ENCODE measurements at regions of chrX and their contacts with region 1.

Region 1: DNA sequence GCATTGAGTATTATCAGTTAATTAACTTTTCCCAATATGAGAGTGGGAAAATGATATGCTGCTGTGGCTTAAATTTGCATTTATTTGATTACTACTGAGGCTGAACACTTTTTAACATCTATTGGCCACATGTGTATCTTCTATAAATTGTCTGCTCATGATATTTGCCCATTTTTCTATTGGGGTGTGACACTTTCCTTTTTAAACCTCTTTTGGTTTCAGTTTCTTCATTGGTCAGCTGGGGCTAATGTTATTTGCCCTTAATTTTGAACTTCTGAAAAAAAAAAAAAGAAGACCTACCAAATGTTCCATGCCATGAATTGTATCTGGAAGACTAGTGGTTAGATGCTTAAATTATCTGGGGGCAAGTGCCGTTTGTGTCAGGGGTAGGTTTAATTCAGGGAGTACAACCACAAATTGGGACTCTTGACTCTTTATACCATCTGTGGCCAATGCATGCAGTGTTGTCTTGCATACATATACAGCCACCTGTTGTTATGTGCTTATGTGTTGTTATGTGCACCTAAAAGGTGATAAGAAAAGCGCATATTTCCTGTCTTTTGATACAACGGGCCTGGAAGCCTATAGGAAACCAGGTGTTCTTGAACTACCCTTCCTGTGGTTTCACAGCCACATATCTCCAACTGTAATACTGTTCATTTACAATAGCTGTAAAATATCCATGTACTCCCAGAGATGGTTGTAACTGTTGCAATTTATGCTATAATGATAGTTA is 49.0 kb downstream of the SH2D1A start:
- DNase-seq: peak in 4 of 5 donors; percentile 15 to 38 (median 28)
- H3K4me3 ChIP-seq: no peak overlapping the region
- H3K4me3 Mint-ChIP-seq: peak overlapping the region; percentile 7 to 83 (median 26)
- H3K27ac ChIP-seq: no peak overlapping the region
- H3K27ac Mint-ChIP-seq: peak overlapping the region; percentile 0 to 83 (median 42)
- H3K4me1 ChIP-seq: peaks cover 25% of the 10 kb centered on the region
- H3K4me1 Mint-ChIP-seq: peaks cover 15 to 38% (median 26%) of the 10 kb centered on the region in 4 donors
- H3K27me3 ChIP-seq: no peaks in the 10 kb centered on the region
- H3K27me3 Mint-ChIP-seq: no peaks in the 10 kb centered on the region

Region 2: DNA sequence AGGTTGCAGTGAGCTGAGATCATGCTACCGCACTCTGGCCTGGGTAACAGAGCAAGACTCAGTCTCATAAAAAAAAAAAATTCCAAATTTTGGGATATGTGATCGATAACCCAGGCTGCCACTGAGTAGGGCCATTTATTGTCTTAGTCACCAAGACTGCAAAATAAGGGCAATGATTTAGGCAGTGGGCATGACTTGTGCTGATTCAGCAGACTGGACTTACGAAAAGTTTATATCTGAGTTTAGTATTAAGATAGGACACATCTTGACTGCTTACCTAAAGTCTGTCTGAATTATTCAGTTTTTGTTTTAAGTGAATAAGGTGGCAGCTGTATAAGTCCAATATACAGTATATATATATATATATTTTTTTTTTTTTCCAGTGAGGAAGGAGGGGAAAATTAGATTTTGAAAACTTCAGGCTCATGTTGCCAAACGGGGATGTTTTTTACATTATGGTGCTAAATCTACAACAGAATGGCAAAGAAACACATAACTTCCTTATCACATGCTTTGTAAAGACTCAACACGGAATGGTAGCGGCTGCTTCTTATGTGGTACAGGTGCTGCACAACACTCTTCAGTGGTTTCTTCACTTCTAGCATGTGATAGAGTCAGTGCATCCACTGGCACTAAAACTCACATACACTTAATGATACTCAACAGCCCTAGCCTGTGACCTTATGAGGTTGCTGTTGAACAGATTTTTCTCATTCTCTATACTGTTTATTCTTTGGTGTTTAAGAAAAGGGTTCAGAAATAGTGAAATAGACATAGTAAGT is 56.4 kb before region 1 on chrX:
- CTCF ChIA-PET with region 1: no interaction called
- POLR2A ChIA-PET with region 1: no interaction called
- intact Hi-C with region 1: no loop called
- DNase-seq: peak; percentile 35 to 61 (median 43)
- H3K4me3 ChIP-seq: no peak overlapping the region
- H3K4me3 Mint-ChIP-seq: peak overlapping the region in 1 of 8 donors; percentile 52
- H3K27ac ChIP-seq: no peak overlapping the region
- H3K27ac Mint-ChIP-seq: peak overlapping the region in 4 of 7 donors; percentile 5 to 60 (median 46)
- H3K4me1 ChIP-seq: peaks cover 40% of the 10 kb centered on the region
- H3K4me1 Mint-ChIP-seq: peaks cover 23 to 43% (median 30%) of the 10 kb centered on the region in 4 donors
- H3K27me3 ChIP-seq: no peaks in the 10 kb centered on the region
- H3K27me3 Mint-ChIP-seq: no peaks in the 10 kb centered on the region

Region 3: DNA sequence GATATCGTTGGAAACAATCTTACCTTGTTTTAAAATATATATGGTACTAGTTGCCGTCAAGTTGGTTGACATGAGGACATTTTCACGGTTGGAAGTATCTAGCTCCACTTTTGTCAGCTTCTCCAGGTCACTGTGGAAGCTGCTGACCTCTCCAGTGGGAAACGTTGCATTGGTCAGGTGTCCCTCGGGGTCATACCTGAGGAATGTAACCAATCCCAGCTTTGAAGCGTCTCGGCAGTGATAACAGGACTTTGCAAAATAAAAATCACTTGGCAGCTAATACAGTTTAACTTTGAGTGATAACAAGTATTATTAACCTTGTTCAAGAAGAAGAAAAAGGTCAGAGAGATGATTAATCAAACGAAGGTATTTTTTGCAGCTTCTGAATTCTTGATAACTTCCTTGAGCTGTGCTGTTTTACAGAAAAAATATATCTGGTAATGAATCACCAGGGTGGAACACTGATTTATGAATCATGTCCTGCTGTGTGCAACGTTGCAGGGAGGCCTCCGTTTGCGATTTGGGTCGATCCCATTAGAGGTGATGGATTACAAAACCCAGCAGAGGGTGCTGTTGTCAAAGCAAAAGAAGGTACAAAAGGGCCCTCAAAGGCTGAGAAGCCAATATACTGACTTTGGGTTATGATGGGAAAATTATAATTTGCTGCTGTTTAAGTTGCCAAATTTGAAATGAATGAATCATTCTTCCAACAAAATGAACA is 11.1 kb after region 1 on chrX:
- CTCF ChIA-PET with region 1: interaction called, 15 read pairs
- POLR2A ChIA-PET with region 1: no interaction called
- intact Hi-C with region 1: no loop called
- DNase-seq: peak; percentile 49 to 52 (median 52)
- H3K4me3 ChIP-seq: no peak overlapping the region
- H3K4me3 Mint-ChIP-seq: no peak overlapping the region
- H3K27ac ChIP-seq: no peak overlapping the region
- H3K27ac Mint-ChIP-seq: no peak overlapping the region
- H3K4me1 ChIP-seq: no peaks in the 10 kb centered on the region
- H3K4me1 Mint-ChIP-seq: peaks cover 0 to 1% (median under 1%) of the 10 kb centered on the region in 4 donors
- H3K27me3 ChIP-seq: no peaks in the 10 kb centered on the region
- H3K27me3 Mint-ChIP-seq: no peaks in the 10 kb centered on the region

Measured in CD4-positive, alpha-beta memory T cell (primary cell).